CD4-positive, alpha-beta memory T cell (primary cell): ENCODE measurements at regions of chr17 and their contacts with region 1.

Region 1: DNA sequence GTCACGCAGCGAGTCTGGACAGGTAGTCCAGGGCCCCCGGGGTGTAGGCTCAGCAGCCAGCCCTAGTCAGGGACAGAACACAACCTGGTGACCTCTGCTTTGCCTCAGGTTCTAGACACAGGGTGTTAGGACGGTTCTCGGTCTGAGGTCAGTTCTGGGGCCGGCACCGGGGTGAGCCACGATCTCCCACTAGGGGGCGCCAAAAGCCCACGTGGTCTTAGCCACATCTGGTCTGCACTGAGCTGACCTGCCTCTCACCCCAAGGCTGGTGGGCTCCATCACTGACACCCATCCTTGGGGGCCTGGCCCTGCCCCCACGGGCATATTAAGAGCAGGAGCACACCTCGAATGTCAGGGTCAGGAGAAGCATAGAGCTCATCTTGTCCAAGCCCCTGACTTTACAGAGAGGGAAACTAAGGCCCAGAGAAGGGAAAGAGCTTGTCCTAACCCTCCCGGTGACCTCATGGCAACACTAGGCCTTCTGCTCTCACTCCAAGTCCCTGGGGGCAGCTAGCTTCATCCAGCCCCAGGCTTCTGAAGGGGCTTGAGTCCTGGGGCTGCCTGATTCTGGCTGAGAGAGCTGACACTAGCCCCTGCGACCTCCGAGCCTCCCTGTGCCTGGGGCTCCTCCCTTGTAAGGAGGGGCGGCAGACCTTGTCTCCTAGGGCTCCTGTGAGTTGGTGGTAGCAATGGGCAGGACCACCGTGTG is 9.0 kb downstream of the SLC5A10 start:
- DNase-seq: peak; percentile 45 to 64 (median 52)
- H3K4me3 ChIP-seq: no peak overlapping the region
- H3K4me3 Mint-ChIP-seq: peak overlapping the region in 1 of 8 donors; percentile 8
- H3K27ac ChIP-seq: no peak overlapping the region
- H3K27ac Mint-ChIP-seq: peak overlapping the region in 2 of 7 donors; percentile 8 to 24
- H3K4me1 ChIP-seq: peaks cover 23% of the 10 kb centered on the region
- H3K4me1 Mint-ChIP-seq: peaks cover 12 to 49% (median 19%) of the 10 kb centered on the region in 4 donors
- H3K27me3 ChIP-seq: no peaks in the 10 kb centered on the region
- H3K27me3 Mint-ChIP-seq: no peaks in the 10 kb centered on the region

Region 2: GRCh38 chr17:18855831-18856569 is 105.0 kb before region 1 on chr17:
- CTCF ChIA-PET with region 1: interaction called, 12 read pairs
- POLR2A ChIA-PET with region 1: interaction called, 22 read pairs
- intact Hi-C with region 1: no loop called
- DNase-seq: peak; percentile 85 to 95 (median 86)
- H3K4me3 ChIP-seq: peak overlapping the region; percentile 62 to 79
- H3K4me3 Mint-ChIP-seq: peak overlapping the region; percentile 92 to 99 (median 96)
- H3K27ac ChIP-seq: peak overlapping the region; percentile 48
- H3K27ac Mint-ChIP-seq: peak overlapping the region; percentile 90 to 98 (median 94)
- H3K4me1 ChIP-seq: peaks cover 46% of the 10 kb centered on the region
- H3K4me1 Mint-ChIP-seq: peaks cover 31 to 50% (median 41%) of the 10 kb centered on the region in 4 donors
- H3K27me3 ChIP-seq: no peaks in the 10 kb centered on the region
- H3K27me3 Mint-ChIP-seq: no peaks in the 10 kb centered on the region

Region 3: DNA sequence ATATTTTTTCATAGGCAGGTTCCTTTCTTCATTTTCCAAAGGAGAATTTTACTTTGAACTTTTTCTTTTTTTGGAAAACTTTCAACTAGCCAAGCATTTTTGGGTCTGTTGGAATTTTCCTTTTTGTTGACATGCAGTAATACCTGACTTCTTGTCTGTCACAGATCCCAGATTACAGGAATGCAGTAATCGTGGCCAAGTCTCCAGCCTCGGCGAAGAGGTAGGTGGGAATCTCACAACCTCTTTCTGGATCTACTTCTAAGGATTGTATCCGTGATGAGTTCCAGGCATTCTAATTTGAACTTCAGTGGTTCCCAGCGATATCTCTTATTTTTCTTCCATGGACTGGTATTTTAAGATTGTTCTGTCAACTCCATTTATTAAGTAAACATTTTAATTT is 71.3 kb before region 1 on chr17:
- CTCF ChIA-PET with region 1: no interaction called
- POLR2A ChIA-PET with region 1: no interaction called
- intact Hi-C with region 1: no loop called
- DNase-seq: no peak
- H3K4me3 ChIP-seq: no peak overlapping the region
- H3K4me3 Mint-ChIP-seq: no peak overlapping the region
- H3K27ac ChIP-seq: no peak overlapping the region
- H3K27ac Mint-ChIP-seq: no peak overlapping the region
- H3K4me1 ChIP-seq: no peaks in the 10 kb centered on the region
- H3K4me1 Mint-ChIP-seq: peaks cover 0 to 16% (median 10%) of the 10 kb centered on the region in 4 donors
- H3K27me3 ChIP-seq: no peaks in the 10 kb centered on the region
- H3K27me3 Mint-ChIP-seq: no peaks in the 10 kb centered on the region

Region 4: GRCh38 chr17:18904482-18904881 is 56.5 kb before region 1 on chr17:
- CTCF ChIA-PET with region 1: interaction called, 11 read pairs
- POLR2A ChIA-PET with region 1: interaction called, 3 read pairs
- intact Hi-C with region 1: loop called (anchors 5 kb)
- DNase-seq: no peak
- H3K4me3 ChIP-seq: no peak overlapping the region
- H3K4me3 Mint-ChIP-seq: no peak overlapping the region
- H3K27ac ChIP-seq: no peak overlapping the region
- H3K27ac Mint-ChIP-seq: no peak overlapping the region
- H3K4me1 ChIP-seq: peaks cover 39% of the 10 kb centered on the region
- H3K4me1 Mint-ChIP-seq: peaks cover 24 to 46% (median 29%) of the 10 kb centered on the region in 4 donors
- H3K27me3 ChIP-seq: no peaks in the 10 kb centered on the region
- H3K27me3 Mint-ChIP-seq: no peaks in the 10 kb centered on the region

Region 5: GRCh38 chr17:18992454-18993130 is 31.6 kb after region 1 on chr17:
- CTCF ChIA-PET with region 1: interaction called, 15 read pairs
- POLR2A ChIA-PET with region 1: interaction called, 3 read pairs
- intact Hi-C with region 1: no loop called
- DNase-seq: peak; percentile 53 to 81 (median 62)
- H3K4me3 ChIP-seq: no peak overlapping the region
- H3K4me3 Mint-ChIP-seq: peak overlapping the region in 5 of 8 donors; percentile 43 to 70 (median 60)
- H3K27ac ChIP-seq: no peak overlapping the region
- H3K27ac Mint-ChIP-seq: peak overlapping the region in 4 of 7 donors; percentile 17 to 74 (median 51)
- H3K4me1 ChIP-seq: peaks cover 26% of the 10 kb centered on the region
- H3K4me1 Mint-ChIP-seq: peaks cover 19 to 47% (median 27%) of the 10 kb centered on the region in 4 donors
- H3K27me3 ChIP-seq: no peaks in the 10 kb centered on the region
- H3K27me3 Mint-ChIP-seq: no peaks in the 10 kb centered on the region

Region 6: GRCh38 chr17:19004421-19005136 is 43.6 kb after region 1 on chr17 and contains the start of gene FAM83G:
- CTCF ChIA-PET with region 1: interaction called, 35 read pairs
- POLR2A ChIA-PET with region 1: interaction called, 11 read pairs
- intact Hi-C with region 1: no loop called
- DNase-seq: peak; percentile 72 to 92 (median 81)
- H3K4me3 ChIP-seq: peak within 1 kb of the TSS; percentile 42 to 57
- H3K4me3 Mint-ChIP-seq: peak within 1 kb of the TSS; percentile 92 to 96 (median 94)
- H3K27ac ChIP-seq: peak within 1 kb of the TSS; percentile 77
- H3K27ac Mint-ChIP-seq: peak within 1 kb of the TSS; percentile 87 to 98 (median 96)
- H3K4me1 ChIP-seq: peaks cover 35% of the 10 kb centered on the region
- H3K4me1 Mint-ChIP-seq: peaks cover 15 to 40% (median 27%) of the 10 kb centered on the region in 4 donors
- H3K27me3 ChIP-seq: no peaks in the 10 kb centered on the region
- H3K27me3 Mint-ChIP-seq: no peaks in the 10 kb centered on the region
- total RNA-seq, gene FAM83G: 13.8 to 15.1 TPM

Region 7: DNA sequence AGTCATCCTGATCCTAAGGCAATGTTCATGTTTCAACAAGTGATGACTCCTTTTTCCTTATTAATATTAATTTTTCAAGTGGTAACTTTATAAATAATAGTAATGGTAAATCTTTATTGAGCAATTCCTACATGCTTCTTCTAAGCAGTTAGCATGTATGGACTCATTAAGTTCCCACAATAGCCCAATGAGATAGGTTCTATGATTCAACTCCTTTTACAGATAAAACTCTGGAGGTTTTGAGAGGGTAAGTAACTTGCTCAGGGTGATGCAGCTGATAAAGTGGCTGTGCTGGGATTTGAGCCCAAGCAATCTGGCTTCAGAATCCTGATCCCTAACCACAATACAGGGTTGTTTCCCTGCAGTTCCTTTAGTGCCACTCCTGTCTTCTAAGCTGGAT is 598.0 kb after region 1 on chr17:
- CTCF ChIA-PET with region 1: no interaction called
- POLR2A ChIA-PET with region 1: no interaction called
- intact Hi-C with region 1: no loop called
- DNase-seq: no peak
- H3K4me3 ChIP-seq: no peak overlapping the region
- H3K4me3 Mint-ChIP-seq: no peak overlapping the region
- H3K27ac ChIP-seq: no peak overlapping the region
- H3K27ac Mint-ChIP-seq: no peak overlapping the region
- H3K4me1 ChIP-seq: no peaks in the 10 kb centered on the region
- H3K4me1 Mint-ChIP-seq: no peaks in the 10 kb centered on the region
- H3K27me3 ChIP-seq: peaks cover 5% of the 10 kb centered on the region
- H3K27me3 Mint-ChIP-seq: peaks cover 15 to 17% of the 10 kb centered on the region in 2 donors